Posterior cingulate gyrus (tissue), 11 donors: ENCODE measurements at regions of chr1 and their contacts with region 1.

Region 1: DNA sequence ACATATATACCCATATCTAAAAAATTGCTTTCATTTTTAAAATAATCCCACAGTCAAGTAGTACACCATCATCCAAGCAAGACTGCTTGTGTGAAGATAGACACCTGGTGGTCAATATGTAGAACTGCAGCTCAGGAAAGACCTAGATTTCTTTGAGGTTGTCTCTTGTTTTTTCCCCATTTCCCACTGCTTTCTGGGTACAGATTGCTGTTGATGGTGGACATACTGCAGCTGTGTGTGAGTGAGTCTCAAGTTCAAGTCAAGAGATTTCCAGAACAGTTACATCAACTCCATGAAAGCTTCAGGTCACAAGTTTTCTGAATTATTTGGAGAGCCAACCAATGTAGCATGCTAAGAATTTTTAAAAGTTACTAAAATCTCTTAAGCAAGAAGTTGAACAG is 306.4 kb downstream of the DUSP10 start:
- DNase-seq: no peak

Region 2: DNA sequence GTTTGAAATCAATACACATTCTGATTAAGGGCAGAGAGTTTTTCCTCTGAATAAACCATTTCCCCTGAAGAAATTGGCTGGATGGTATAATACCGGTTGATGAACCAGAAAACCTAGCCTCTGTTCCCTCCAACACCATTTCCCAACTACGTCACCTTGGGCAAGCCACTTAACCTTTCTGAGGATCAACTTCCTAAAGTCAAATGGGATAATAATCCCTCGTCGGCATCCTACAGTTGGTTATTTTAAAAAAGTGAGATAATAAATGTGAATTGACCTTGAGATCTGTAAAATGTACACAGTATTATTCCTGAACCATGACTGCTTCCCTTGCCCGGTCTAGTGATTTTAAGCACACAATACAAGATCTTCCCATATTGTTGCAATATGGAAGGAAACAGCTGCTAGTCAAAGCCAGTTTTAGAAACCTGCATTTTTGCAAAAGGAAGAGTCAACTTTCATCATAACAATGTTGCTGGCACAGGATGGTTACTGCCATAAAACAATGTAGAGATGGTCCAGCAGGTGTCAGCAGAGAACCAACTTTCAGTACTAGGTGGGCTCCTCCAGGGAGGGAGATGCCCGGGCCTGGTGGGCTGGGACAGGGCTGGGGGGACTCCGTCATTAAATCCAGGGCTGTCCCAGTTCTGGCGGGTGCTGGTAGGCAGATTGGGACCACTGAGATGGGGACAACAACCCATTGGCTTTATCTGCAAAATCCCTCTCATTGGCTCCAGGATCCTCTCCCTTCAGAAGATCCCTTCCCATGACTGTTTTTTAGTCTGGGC is 561.4 kb before region 1 on chr1:
- intact Hi-C with region 1: loop called (anchors 2 kb)
- DNase-seq: peak in 2 of 10 donors; percentile 47 to 66

Region 3: GRCh38 chr1:221263831-221264767 is 171.4 kb before region 1 on chr1:
- intact Hi-C with region 1: loop called (anchors 1 kb)
- DNase-seq: peak in 7 of 10 donors; percentile 27 to 91 (median 64)

Region 4: DNA sequence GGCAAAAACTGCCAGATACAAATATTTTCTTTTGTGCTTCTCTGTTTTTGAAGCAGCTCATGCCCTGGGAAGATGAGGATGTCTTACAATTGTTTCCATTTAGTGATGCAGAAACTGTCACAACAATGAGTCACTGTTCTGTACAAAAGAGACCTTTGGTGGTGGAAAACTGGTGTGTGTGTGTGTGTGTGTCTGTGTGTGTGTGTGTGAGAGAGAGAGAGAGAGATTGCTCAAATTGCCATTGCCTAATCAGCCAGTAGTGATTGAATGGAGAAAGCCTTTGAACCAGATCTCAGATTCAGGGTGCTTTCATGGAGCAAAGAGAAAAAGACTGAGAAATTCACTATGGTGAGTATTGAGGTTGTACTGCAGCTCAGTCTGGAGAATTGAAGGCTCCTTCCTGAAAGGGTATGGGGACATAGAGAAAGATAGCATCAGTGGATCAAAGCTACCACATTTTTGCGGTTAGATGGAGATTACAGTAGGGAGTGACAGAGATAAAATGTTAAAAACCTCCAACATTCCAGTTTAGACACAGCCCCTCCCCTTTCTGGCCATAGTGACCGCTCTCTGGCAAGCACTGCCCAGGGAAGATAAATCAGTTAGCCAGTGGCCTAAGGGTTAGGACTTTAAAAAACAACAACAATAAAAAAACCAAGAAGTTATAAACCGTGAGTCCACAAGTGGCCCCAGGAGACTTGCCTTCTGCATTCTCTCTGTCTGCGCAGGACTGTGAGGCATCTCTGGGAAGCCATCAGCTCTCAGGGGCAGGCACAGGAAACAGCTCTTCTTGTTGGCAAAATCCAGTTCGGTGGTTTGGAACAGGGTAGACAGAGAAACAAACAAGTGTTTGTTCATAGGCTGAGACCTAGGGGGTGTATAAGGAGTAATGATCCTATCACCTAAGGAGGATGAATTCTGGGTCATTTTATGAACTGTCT is 100.1 kb before region 1 on chr1:
- intact Hi-C with region 1: loop called (anchors 5 kb)
- DNase-seq: peak in 4 of 10 donors; percentile 8 to 67 (median 28)

Region 5: DNA sequence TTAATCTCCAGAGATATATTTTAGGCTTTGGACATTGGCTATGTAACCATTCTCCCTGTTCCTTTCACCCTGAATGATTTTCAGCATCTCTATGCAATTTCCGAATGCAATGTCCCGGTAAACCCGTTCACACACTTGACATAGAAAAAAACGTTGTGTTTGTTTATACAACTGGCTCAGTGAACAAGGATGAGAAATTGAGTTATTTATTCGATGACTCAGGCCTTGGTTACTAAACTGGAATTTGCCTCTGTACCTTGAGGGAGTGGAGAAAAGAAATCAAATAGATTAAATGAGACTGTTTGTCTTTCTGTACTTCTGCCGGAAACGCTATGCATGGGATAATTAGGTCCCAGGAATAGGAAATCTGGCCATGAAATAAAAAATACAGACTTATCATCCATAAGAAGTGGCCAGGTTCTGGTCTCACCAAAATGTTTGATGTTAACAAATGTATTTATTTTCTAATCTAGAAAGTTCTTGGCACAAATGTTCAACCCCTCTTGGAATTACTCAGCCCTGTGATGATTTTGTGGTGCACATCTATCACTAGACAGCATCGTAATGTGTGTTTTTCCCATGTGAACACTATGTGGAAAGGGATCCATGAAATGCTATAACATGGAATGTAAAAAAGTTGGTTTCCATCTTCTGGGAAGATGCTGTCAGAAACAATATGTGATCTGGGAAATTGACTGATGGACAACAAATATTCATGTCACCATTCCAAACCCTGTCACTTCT is 52.4 kb after region 1 on chr1:
- intact Hi-C with region 1: no loop called
- DNase-seq: no peak